Calu3 (cell line): ENCODE measurements at regions of chr15 and their contacts with region 1.

Region 1: GRCh38 chr15:50003786-50004334 is 115.2 kb downstream of the ATP8B4 start:
- DNase-seq: peak; percentile 84
- H3K4me3 Mint-ChIP-seq: no peak overlapping the region
- H3K27ac Mint-ChIP-seq: no peak overlapping the region
- H3K4me1 Mint-ChIP-seq: no peaks in the 10 kb centered on the region
- H3K27me3 Mint-ChIP-seq: no peaks in the 10 kb centered on the region
- CTCF ChIP-seq: peak; percentile 68

Region 2: DNA sequence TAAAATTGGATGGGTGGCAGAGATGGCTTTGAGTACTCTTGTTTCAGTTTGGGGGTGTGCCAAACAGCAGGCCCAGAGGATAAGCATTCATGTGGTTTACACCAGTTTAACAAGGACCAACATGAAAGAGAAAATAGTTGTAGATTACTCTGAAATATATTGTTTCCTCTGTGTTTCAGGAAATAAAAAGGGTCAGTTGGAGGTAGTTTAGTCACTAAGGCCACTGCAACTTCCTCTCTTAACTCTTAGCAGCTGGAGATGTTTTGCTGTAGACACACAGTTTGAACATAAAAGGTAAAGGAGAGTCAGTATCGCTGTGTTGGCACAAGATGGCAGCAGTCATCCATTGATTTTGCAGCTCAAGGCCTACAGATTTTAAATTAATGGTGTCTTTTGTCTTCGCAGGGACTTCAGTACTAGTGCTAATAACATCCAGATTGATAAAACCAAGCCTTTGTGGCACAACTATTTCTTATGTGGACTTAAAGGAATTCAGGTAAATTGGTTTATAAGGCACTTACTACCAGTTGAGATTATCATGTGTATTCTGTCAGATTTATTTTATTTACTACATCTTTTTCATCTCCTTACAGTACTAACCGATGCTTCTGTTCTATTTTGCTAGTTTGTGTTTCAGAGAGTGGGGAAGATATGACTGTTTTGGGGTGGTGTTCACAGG is 768.3 kb before region 1 on chr15:
- CTCF ChIA-PET with region 1: interaction called, 4 read pairs
- intact Hi-C with region 1: loop called (anchors 1 kb)
- DNase-seq: peak; percentile 36
- H3K4me3 Mint-ChIP-seq: no peak overlapping the region
- H3K27ac Mint-ChIP-seq: no peak overlapping the region
- H3K4me1 Mint-ChIP-seq: peaks cover 13% of the 10 kb centered on the region
- H3K27me3 Mint-ChIP-seq: no peaks in the 10 kb centered on the region
- CTCF ChIP-seq: peak; percentile 35

Region 3: DNA sequence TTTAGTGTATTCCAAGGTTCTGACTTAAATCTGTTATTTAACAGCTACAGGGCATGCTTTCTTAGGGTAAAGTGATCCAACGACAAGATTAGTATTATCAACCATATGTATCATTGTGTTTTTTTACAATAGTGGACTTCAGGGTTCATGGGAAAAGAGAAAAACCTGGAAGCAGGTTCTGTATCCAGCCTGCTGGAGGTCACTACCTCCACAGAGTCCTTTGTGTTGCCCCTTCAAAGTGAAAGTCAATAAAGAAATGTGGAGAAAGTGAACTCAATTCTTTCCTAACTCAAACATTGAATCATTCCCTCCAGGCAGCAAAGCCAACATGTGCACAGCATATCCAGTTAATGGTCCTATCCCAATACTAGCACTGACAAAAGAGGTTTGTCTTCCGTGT is 535.4 kb before region 1 on chr15:
- CTCF ChIA-PET with region 1: no interaction called
- intact Hi-C with region 1: loop called (anchors 10 kb)
- DNase-seq: no peak
- H3K4me3 Mint-ChIP-seq: no peak overlapping the region
- H3K27ac Mint-ChIP-seq: no peak overlapping the region
- H3K4me1 Mint-ChIP-seq: no peaks in the 10 kb centered on the region
- H3K27me3 Mint-ChIP-seq: no peaks in the 10 kb centered on the region
- CTCF ChIP-seq: no peak

Region 4: GRCh38 chr15:49876401-49877038 is 127.3 kb before region 1 on chr15:
- CTCF ChIA-PET with region 1: interaction called, 8 read pairs
- intact Hi-C with region 1: loop called (anchors 5 kb)
- DNase-seq: no peak
- H3K4me3 Mint-ChIP-seq: no peak overlapping the region
- H3K27ac Mint-ChIP-seq: no peak overlapping the region
- H3K4me1 Mint-ChIP-seq: no peaks in the 10 kb centered on the region
- H3K27me3 Mint-ChIP-seq: peaks cover 12% of the 10 kb centered on the region
- CTCF ChIP-seq: no peak

Region 5: GRCh38 chr15:50051803-50052419 is 48.1 kb after region 1 on chr15:
- CTCF ChIA-PET with region 1: no interaction called
- intact Hi-C with region 1: loop called (anchors 2 kb)
- DNase-seq: peak; percentile 59
- H3K4me3 Mint-ChIP-seq: no peak overlapping the region
- H3K27ac Mint-ChIP-seq: no peak overlapping the region
- H3K4me1 Mint-ChIP-seq: no peaks in the 10 kb centered on the region
- H3K27me3 Mint-ChIP-seq: no peaks in the 10 kb centered on the region
- CTCF ChIP-seq: peak; percentile 55